ENCODE measurements at regions of chr15 and their contacts with region 1.

Region 1: GRCh38 chr15:90400406-90401314 is 12.6 kb downstream of the IQGAP1 start:
- DNase-seq: peak; percentile 82 to 83
- ATAC-seq: peak; percentile 94
- H3K4me3 ChIP-seq: peak overlapping the region in 1 of 2 donors; percentile 41
- H3K27ac ChIP-seq: peak overlapping the region; percentile 96 to 99
- H3K4me1 ChIP-seq: peaks cover 12 to 20% of the 10 kb centered on the region in 2 donors
- H3K27me3 ChIP-seq: no peaks in the 10 kb centered on the region

Region 2: DNA sequence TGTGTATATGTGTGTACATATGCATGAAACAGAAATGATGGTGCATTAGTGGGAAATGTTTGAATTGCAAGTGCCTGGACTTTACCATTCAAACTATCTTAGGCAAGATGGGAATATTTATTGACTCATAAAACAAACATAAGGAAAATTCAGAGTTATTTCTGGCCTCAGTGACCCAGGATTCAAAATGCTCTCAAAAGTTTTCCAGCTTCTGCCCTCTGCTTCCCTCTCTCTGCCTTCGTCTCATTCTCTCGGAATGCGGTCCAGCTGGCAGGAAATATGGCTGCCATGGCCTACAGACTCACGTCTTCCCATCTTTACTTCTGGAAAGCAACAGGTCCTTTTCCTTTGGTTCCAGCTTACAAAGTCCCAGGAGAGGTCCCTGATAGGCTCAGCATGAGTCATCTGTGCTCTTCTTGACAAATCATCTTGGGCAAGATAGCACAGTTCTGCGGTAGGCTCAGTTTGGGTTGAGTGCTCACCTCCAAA is 57.3 kb before region 1 on chr15:
- intact Hi-C with region 1: no loop called
- DNase-seq: peak; percentile 79 to 83
- ATAC-seq: peak; percentile 26
- H3K4me3 ChIP-seq: no peak overlapping the region
- H3K27ac ChIP-seq: peak overlapping the region; percentile 46 to 93
- H3K4me1 ChIP-seq: peaks cover 0 to 4% of the 10 kb centered on the region in 2 donors
- H3K27me3 ChIP-seq: no peaks in the 10 kb centered on the region

Region 3: DNA sequence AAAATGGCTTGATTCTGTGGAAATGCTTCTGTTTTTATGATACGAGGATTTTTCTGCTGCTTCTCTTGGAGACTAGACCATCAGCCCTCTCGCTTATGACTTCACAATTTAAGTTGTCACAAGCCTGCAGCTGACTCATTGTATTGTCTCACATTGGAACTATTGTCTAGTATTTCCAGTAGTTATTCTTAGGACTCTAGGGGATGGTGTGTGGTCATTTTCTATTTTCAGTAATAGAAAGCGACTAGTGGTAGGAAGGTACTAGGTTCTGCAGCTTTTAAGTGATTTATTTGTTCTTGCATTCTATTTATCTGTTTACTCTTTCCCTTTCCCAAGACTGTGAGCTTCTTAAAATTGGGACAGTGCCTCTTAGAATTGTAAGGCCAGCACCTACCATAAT is 62.7 kb after region 1 on chr15:
- intact Hi-C with region 1: loop called in 1 of 2 experiments (anchors 5 kb)
- DNase-seq: no peak
- ATAC-seq: peak; percentile 87
- H3K4me3 ChIP-seq: no peak overlapping the region
- H3K27ac ChIP-seq: peak overlapping the region; percentile 59 to 93
- H3K4me1 ChIP-seq: peaks cover 4 to 19% of the 10 kb centered on the region in 2 donors
- H3K27me3 ChIP-seq: no peaks in the 10 kb centered on the region

Region 4: DNA sequence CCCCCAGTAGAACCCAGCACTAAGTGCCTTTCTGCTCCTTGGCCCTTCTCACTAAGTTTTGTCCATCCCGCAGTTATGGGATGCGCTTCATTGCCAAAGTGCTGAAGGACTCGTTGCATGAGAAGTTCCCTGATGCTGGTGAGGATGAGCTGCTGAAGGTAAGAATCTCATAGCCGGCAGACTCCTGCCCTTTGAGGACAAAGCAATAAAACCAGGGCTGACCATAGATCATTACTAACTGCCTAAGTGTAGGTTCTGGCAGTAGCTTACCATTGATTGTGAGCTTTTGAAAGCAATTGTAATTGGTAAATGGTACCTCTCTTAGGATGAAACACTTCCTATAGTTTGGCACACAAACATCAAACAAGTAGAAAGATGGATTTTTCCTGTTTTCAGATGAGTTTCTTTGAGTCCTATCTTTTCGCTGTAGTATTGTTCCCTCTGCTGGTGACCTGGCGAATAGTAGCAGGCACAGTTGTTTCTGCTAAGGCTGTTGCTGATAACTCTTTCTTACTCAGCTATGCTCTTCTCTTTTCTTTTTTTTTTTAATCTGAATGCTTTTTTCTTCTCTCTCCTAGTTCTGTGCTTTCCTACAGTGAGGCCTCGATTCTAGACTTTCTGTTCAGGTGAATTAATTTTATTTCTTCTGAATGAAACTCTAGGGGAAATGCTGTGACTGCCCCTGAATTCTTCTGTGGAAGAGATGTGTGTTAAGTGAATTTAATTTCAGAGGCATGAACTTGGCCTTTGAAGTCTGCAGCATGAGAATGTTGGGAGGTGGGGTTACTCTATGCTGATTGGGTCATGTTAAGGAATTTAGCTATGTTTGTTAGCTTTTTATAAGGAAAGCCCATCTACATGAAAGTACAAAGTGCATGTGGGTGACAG is 81.7 kb after region 1 on chr15:
- intact Hi-C with region 1: loop called in 1 of 2 experiments (anchors 5 kb)
- DNase-seq: no peak
- ATAC-seq: peak; percentile 76
- H3K4me3 ChIP-seq: no peak overlapping the region
- H3K27ac ChIP-seq: no peak overlapping the region
- H3K4me1 ChIP-seq: peaks cover 0 to 2% of the 10 kb centered on the region in 2 donors
- H3K27me3 ChIP-seq: no peaks in the 10 kb centered on the region

Region 5: DNA sequence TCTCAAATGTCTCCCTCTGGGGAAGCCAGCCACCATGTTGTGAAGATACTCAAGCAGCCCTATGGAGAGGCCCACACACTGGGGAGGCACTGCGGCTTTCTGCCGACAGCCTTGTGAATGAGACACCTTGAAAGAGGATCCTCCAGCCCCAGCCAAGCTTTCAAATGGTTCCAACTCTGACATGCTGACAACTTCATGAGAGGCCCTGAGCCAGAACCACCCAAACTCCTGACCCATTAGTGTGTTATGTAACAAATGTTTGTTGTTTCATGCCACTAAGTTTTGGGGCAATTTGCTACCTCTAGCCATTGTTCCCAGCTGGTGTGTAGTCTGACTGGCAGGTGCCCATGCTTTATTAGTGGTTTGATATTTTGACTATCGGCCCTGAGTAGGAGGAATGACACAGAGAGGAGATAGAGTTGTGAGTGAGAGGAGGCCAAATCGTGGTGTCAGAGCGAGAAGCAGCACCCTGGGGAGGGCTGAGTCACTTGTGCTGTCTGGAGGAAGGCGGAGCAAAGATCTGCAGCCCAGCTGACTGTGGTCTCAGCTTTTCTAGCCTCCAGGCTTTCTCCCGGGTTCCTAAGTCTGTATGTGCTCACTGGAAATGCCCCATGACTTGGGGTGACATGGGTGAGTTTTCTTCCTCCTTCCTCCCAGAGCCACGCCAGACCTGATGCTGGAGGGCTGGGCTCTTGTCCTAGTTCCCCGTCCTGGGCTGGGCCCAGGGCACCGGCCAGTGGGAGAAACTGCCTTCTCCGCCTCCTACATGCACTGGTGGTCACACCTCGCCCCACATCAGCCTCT is 259.7 kb after region 1 on chr15:
- intact Hi-C with region 1: no loop called
- DNase-seq: peak; percentile 89 to 91
- ATAC-seq: peak; percentile 85
- H3K4me3 ChIP-seq: no peak overlapping the region
- H3K27ac ChIP-seq: no peak overlapping the region
- H3K4me1 ChIP-seq: no peaks in the 10 kb centered on the region
- H3K27me3 ChIP-seq: no peaks in the 10 kb centered on the region